ENCODE measurements at regions of chr3 and their contacts with region 1.

Region 1: DNA sequence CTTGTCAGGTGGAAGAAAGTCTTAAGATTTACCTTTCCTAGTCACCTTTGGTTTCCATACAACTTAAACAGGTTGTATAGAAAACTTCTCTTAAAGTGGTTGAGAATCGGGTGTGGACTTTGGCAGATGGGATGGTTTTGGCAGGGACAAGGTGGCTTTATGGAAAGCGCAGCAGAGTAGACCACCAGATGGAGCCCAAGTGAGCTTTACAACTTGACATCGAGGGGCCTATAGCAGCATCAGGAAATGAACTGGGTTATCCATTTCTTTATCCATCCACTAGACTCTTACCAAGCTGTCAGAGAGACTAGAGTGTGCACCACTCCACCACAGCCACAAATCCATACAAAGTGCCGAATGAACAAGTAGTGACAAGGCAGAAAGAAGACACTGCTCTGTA is 85.3 kb upstream of the MBNL1 start:
- DNase-seq: peak; percentile 66
- H3K4me3 Mint-ChIP-seq: no peak overlapping the region
- H3K27ac Mint-ChIP-seq: no peak overlapping the region
- H3K4me1 Mint-ChIP-seq: peaks cover 64% of the 10 kb centered on the region
- H3K27me3 Mint-ChIP-seq: no peaks in the 10 kb centered on the region

Region 2: GRCh38 chr3:152197451-152197850 is 14.0 kb after region 1 on chr3:
- CTCF ChIA-PET with region 1: interaction called, 10 read pairs
- DNase-seq: no peak
- H3K4me3 Mint-ChIP-seq: peak overlapping the region; percentile 68
- H3K27ac Mint-ChIP-seq: peak overlapping the region; percentile 97
- H3K4me1 Mint-ChIP-seq: peaks cover 82% of the 10 kb centered on the region
- H3K27me3 Mint-ChIP-seq: no peaks in the 10 kb centered on the region

Region 3: DNA sequence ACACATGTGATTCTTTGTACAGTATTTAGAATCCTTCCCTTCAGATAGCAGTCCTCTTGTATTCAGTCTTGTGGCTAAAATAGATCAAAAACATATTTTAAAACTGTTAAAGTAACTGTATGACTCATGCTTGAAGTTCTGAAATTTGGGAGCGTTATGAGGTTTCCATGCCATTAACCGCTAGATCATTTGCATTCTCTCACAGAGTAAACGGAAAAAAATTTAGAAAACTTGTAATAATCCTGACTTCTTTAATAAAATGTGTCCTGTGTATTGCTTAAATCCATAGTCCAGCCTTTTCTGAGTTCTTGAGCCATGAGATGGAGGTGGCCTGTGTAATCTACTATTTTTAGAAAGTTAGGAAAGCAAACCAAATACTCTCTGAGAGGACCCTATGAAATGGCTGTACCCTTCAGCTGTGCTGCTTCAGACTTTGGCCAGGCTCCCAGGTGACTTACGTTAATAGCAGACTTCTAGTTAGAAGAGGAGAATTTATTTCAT is 119.1 kb after region 1 on chr3:
- CTCF ChIA-PET with region 1: interaction called, 13 read pairs
- DNase-seq: no peak
- H3K4me3 Mint-ChIP-seq: peak overlapping the region; percentile 14
- H3K27ac Mint-ChIP-seq: peak overlapping the region; percentile 69
- H3K4me1 Mint-ChIP-seq: peaks cover 77% of the 10 kb centered on the region
- H3K27me3 Mint-ChIP-seq: no peaks in the 10 kb centered on the region

Region 4: GRCh38 chr3:152356870-152357276 is 173.4 kb after region 1 on chr3:
- CTCF ChIA-PET with region 1: no interaction called
- DNase-seq: no peak
- H3K4me3 Mint-ChIP-seq: no peak overlapping the region
- H3K27ac Mint-ChIP-seq: peak overlapping the region; percentile 71
- H3K4me1 Mint-ChIP-seq: peaks cover 45% of the 10 kb centered on the region
- H3K27me3 Mint-ChIP-seq: no peaks in the 10 kb centered on the region

Measured in activated naive CD4-positive, alpha-beta T cell treated with anti-CD3 and anti-CD28 coated beads, Interleukin-2, amount 10 ng/mL, durations not matched to agents 7 days and 5 days (primary cell).